H1 (cell line): ENCODE measurements at regions of chr3 and their contacts with region 1.

Region 1: GRCh38 chr3:115217678-115218451 is 70.8 kb upstream of the ZBTB20 start:
- DNase-seq: peak in 1 of 2 experiments; percentile 25
- H3K4me3 ChIP-seq: no peak overlapping the region
- H3K27ac ChIP-seq: no peak overlapping the region
- H3K4me1 ChIP-seq: peaks cover 0 to 6% (median 5%) of the 10 kb centered on the region in 4 experiments; a peak in 2 of 7 replicates
- H3K27me3 ChIP-seq: no peaks in the 10 kb centered on the region
- CTCF ChIP-seq: peak in 2 of 3 experiments; percentile 53 to 62; a peak in 2 of 4 replicates
- EP300 ChIP-seq: no peak
- POLR2A ChIP-seq: no peak
- RAD21 ChIP-seq: peak; percentile 87 to 88

Region 2: DNA sequence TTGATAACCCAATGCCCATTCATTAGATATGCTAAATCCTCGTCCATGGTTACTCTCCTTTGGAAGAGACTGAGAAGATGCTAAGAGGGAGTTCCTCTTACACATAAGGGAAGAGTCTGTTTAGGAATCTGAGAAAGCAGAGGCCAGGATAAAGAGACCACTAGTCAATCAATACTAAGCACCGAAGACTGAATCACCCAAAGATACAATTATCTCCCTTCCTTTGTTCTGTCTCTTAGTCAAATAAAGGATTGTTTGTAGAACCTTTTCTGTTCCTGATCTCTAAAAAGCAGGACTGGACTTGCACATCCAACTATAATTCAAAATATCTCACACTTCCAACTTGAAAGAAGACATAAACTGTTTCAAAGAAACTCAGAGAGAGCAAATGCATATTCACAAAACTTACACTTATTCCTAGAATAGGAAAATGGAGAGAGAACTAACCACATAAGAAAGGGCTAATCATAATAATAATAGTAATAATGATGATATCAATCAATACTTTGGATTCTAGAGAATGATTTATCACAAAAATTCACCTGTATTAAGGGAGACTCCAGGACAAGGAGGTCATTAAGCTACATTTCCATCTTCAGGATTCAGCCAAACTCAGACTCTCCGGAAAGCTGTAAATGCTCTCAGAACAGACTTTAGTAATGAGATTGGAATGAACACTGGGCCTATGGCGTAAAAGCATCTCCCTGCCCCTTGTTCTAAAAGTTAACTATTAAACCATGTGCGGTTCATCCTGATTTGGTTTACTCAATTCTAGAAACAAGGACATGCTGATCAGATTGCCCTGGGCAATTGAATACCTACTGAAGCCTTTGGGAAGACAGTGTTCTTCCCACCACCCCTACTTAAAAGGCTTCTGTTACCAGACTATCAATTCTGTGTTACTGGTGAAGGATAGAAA is 472.3 kb before region 1 on chr3:
- CTCF ChIA-PET with region 1: no interaction called
- POLR2A ChIA-PET with region 1: no interaction called
- DNase-seq: no peak
- H3K4me3 ChIP-seq: no peak overlapping the region
- H3K27ac ChIP-seq: no peak overlapping the region
- H3K4me1 ChIP-seq: no peaks in the 10 kb centered on the region
- H3K27me3 ChIP-seq: no peaks in the 10 kb centered on the region
- CTCF ChIP-seq: no peak
- EP300 ChIP-seq: no peak
- POLR2A ChIP-seq: no peak
- RAD21 ChIP-seq: no peak

Region 3: DNA sequence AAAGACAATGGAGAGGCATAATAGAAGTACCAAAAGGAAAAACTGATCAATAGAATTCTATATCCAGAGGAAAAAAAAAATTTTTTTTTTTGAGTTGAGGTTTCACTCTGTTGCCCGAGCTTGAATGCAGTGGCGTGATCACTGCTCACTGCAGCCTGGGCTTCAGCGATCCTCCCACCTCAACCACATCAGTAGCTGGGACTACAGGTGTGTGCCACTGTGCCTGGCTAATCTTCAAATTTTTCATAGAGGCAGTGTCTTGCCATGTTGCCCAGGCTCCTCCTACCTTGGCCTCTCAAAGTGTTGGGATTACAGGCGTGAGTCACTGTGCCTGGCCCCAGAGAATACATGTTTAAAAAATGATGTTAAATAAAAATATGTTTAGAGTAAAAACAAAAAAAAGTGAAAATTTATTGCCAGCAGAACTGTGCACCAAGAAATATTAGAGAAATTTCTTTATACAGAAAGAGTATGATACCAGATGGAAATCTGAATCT is 83.5 kb after region 1 on chr3:
- CTCF ChIA-PET with region 1: no interaction called
- POLR2A ChIA-PET with region 1: no interaction called
- DNase-seq: no peak
- H3K4me3 ChIP-seq: no peak overlapping the region
- H3K27ac ChIP-seq: no peak overlapping the region
- H3K4me1 ChIP-seq: peaks cover 0 to 2% (median 0%) of the 10 kb centered on the region in 4 experiments; a peak in 1 of 7 replicates
- H3K27me3 ChIP-seq: no peaks in the 10 kb centered on the region
- CTCF ChIP-seq: no peak
- EP300 ChIP-seq: no peak
- POLR2A ChIP-seq: no peak
- RAD21 ChIP-seq: no peak

Region 4: GRCh38 chr3:115436767-115437301 is 219.0 kb after region 1 on chr3:
- CTCF ChIA-PET with region 1: interaction called, 11 read pairs
- POLR2A ChIA-PET with region 1: no interaction called
- DNase-seq: peak in 1 of 2 experiments; percentile 13
- H3K4me3 ChIP-seq: no peak overlapping the region
- H3K27ac ChIP-seq: no peak overlapping the region
- H3K4me1 ChIP-seq: peaks cover 0 to 3% (median 0%) of the 10 kb centered on the region in 4 experiments; a peak in 1 of 7 replicates
- H3K27me3 ChIP-seq: no peaks in the 10 kb centered on the region
- CTCF ChIP-seq: peak in 2 of 3 experiments; percentile 21 to 61; a peak in 2 of 4 replicates
- EP300 ChIP-seq: no peak
- POLR2A ChIP-seq: no peak
- RAD21 ChIP-seq: peak; percentile 61 to 70

Region 5: GRCh38 chr3:115692887-115693524 is 475.1 kb after region 1 on chr3:
- CTCF ChIA-PET with region 1: interaction called, 19 read pairs
- POLR2A ChIA-PET with region 1: no interaction called
- DNase-seq: peak; percentile 41 to 84
- H3K4me3 ChIP-seq: no peak overlapping the region
- H3K27ac ChIP-seq: no peak overlapping the region
- H3K4me1 ChIP-seq: no peaks in the 10 kb centered on the region
- H3K27me3 ChIP-seq: no peaks in the 10 kb centered on the region
- CTCF ChIP-seq: peak; percentile 61 to 89 (median 83)
- EP300 ChIP-seq: no peak
- POLR2A ChIP-seq: no peak
- RAD21 ChIP-seq: peak; percentile 99